ENCODE measurements at regions of chr6 and their contacts with region 1.

Region 1: DNA sequence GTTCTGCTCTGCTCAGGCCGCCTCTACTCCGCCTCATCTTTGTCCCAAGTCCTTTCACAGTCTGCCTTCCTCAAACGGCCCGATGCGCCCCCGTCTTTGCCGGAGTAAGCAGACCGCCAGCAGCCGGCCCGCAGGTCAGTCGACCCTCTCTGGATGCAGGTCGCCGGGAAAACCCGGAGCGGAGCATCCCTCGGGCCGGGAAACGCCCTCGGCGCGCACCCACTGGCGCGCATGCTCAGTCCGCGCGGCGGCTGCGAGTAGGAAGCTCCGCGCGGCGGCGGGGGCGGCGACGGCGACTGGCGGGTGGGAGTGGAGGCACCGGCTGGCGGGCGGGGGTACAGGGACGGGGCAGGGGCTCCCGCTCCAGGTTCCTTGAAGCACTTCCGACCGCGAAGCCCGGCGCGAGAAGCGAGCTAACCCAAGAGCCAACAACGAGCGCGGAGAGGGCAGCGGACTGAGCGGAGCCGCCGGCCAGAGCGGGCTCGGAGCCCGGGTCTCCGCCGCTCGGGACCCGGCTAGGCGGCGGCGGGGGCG is at the start of gene LRRC1:
- H3K4me3 ChIP-seq: peak within 1 kb of the TSS; percentile 77
- H3K27ac ChIP-seq: peak within 1 kb of the TSS; percentile 86
- H3K4me1 ChIP-seq: peaks cover 18% of the 10 kb centered on the region
- CTCF ChIP-seq: no peak; the same call in 1 of the 2 replicates

Region 2: GRCh38 chr6:53771785-53772624 is 22.8 kb before region 1 on chr6:
- CTCF ChIA-PET with region 1: interaction called, 3 read pairs
- POLR2A ChIA-PET with region 1: interaction called, 17 read pairs
- H3K4me3 ChIP-seq: no peak overlapping the region
- H3K27ac ChIP-seq: no peak overlapping the region
- H3K4me1 ChIP-seq: peaks cover 6% of the 10 kb centered on the region
- CTCF ChIP-seq: no peak